Dendritic cell treated with granulocyte-macrophage colony-stimulating factor and Interleukin-4, amounts not matched to agents 40 ng/mL and 50 ng/mL, for 4 days (primary cell): ENCODE measurements at regions of chr16 and their contacts with region 1.

Region 1: GRCh38 chr16:81505011-81505661 is 60.5 kb downstream of the CMIP start:
- H3K4me3 Mint-ChIP-seq: peak overlapping the region; percentile 55
- H3K27ac Mint-ChIP-seq: peak overlapping the region; percentile 89
- H3K4me1 Mint-ChIP-seq: peaks cover 96% of the 10 kb centered on the region
- H3K27me3 Mint-ChIP-seq: no peaks in the 10 kb centered on the region

Region 2: DNA sequence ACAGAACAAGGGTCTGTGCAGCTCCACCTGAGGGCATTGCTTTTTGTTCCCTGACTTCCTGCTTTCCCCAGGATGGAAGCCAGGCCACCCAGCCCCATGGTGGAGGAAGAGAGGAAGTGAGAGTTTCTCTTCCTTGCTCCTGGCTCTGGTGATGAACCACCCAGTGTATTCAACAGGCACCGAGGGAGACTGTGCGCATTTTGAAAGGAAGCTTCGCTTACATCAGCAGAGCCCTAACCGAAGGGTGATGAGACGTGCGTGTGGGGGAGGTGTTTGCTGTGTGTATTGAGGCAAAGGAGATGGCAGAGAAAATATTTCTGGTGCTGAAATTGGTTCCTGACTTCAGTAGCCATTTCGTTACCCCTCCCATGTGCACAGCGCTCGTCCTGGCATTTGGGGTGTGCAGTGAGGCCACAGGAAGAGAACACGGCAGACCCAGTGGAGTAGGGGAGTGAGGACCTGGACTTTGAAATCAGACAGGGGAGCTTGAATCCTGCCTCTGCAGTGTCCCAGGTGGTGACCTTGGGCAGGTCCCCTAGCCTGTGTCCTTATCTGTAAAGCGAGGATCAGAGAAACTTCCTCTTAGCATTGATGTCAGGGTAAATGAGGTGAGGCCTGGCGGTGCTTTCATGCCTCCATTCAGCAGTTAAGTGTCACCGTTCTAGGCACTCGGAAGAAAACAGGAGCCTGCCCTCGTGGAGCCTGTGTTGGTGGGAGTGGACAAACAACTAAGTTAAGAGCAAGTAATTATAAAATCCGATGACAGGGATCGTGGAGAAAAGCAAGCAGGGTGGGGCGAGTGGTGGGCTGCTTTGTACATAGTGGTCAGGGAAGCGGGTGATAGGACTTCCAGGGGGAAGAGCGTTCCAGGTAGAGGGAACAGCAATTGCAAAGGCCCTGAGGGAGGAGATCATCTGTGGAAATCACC is 53.1 kb before region 1 on chr16:
- intact Hi-C with region 1: loop called (anchors 2 kb)
- H3K4me3 Mint-ChIP-seq: peak overlapping the region; percentile 69
- H3K27ac Mint-ChIP-seq: peak overlapping the region; percentile 81
- H3K4me1 Mint-ChIP-seq: peaks cover 100% of the 10 kb centered on the region
- H3K27me3 Mint-ChIP-seq: no peaks in the 10 kb centered on the region

Region 3: DNA sequence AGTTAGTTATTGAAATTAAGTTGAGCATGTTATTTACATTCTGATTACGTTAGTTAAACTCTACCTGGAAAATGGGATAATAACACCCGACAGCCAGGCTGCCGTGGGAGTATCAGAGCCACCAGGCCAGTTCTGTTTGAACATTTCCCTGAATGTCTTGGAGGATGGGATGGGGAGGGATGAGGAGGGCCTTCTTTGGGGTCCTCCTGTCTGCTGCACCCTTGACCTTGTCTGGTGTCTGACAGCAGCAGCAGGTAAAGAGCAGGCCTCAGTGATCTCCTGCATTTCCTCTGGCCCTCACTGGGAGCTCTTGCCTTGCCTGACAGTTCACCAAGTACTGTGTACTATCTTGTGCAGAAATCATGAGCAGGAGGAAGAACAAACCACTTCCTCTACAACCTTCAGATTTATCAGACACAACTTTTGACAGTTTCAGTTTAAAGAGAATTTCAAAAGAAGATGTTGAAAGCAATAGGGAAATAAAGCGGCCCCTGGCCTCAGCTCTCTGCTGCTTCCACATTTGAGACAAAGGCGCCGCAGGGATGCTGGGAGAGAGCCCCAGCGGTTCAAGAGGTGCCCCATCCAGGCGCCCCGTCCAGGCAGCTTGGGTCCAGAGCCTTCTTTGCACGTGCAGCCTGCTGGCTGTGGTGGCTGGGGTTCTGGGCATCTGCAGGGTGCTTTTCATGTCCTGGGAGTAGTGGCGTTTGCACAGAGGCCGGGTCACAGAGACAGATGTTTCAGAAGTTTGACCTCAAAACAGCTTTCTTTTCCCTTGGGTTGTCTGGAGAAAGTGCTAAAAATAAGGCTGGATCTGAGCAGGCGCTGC is 35.2 kb before region 1 on chr16:
- intact Hi-C with region 1: loop called (anchors 5 kb)
- H3K4me3 Mint-ChIP-seq: peak overlapping the region; percentile 69
- H3K27ac Mint-ChIP-seq: peak overlapping the region; percentile 87
- H3K4me1 Mint-ChIP-seq: peaks cover 96% of the 10 kb centered on the region
- H3K27me3 Mint-ChIP-seq: no peaks in the 10 kb centered on the region

Region 4: DNA sequence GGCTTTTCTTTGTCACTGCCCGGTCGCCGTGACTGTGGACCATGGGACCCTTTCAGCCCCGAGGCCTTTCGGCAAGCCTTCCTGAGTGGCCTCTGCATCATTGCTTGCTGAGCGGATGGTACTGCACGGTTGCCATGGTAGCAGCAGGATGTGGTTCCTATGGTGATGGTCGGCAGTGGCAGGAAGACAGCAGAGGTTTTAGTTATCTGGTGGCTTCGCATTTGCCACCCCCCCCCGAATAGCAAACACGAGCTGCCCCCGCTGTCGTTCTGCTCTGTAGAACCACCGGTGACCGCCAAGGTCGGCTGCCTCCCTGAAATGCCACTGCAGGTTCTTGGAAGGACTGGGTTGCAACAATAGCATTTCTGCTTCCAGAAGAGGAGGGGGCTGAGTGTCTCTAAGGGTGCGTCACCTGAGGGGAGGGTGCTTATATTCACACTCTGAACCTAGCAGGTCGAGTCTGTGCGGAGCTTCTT is 16.1 kb after region 1 on chr16:
- intact Hi-C with region 1: loop called (anchors 2 kb)
- H3K4me3 Mint-ChIP-seq: no peak overlapping the region
- H3K27ac Mint-ChIP-seq: peak overlapping the region; percentile 46
- H3K4me1 Mint-ChIP-seq: peaks cover 56% of the 10 kb centered on the region
- H3K27me3 Mint-ChIP-seq: no peaks in the 10 kb centered on the region